ENCODE measurements at regions of chr4 and their contacts with region 1.

Region 1: DNA sequence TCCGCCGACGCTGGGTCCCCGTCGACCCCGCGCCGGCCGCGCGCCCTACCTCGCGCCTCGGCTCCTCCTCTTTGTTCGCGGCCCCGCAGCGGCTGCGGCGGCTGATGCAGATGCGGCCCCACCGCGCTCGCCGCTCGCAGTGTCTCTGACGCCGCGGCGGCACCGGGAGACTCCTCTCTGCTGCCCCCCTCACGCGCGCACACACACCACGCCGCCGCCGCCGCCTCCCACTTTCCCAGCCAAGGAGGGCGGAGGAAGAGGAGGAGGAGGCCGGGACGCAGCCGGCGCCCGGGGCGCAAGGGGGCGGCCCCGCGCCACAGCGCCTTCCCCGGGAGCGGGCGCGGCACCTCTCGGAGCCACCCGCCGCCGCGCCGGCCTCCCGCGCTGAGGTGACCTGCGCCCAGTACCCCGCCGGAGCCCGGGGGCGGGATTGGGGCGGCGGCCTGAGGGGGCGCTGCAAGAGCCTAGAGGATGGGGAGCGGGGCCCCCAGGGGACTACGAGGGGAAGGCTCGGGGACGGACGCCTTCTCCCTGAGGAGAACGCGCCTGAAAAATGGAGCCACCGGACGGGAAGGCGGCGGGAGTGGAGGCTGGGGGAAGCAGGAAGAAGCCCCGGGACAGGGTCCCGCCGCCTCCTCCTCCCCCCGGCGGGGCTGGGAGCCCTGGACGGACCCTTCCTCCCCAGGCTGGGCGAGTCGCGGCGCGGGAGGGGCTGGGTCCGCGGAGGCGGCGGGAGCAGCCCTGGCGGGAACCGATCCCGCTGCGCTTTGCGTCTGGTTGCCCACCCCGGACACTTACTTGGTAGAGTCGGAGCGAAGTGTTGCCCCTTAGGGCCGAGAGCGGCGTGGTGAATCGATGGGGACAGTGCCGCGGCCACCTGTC is at the start of gene SH3RF1:
- DNase-seq: peak; percentile 59
- ATAC-seq: peak; percentile 64
- H3K4me3 Mint-ChIP-seq: peak within 1 kb of the TSS; percentile 70
- H3K27ac Mint-ChIP-seq: no peak within 1 kb of the TSS
- H3K4me1 Mint-ChIP-seq: peaks cover 4% of the 10 kb centered on the region
- H3K27me3 Mint-ChIP-seq: peaks cover 56% of the 10 kb centered on the region
- total RNA-seq, gene SH3RF1: 0.39 to 0.63 TPM

Region 2: GRCh38 chr4:168864821-168865541 is 406.1 kb before region 1 on chr4:
- CTCF ChIA-PET with region 1: no interaction called
- POLR2A ChIA-PET with region 1: no interaction called
- intact Hi-C with region 1: loop called in 1 of 2 experiments (anchors 10 kb)
- DNase-seq: no peak
- ATAC-seq: no peak
- H3K4me3 Mint-ChIP-seq: no peak overlapping the region
- H3K27ac Mint-ChIP-seq: no peak overlapping the region
- H3K4me1 Mint-ChIP-seq: peaks cover 47% of the 10 kb centered on the region
- H3K27me3 Mint-ChIP-seq: peaks cover 6% of the 10 kb centered on the region

Region 3: GRCh38 chr4:169099771-169100180 is 171.3 kb before region 1 on chr4:
- CTCF ChIA-PET with region 1: no interaction called
- POLR2A ChIA-PET with region 1: no interaction called
- intact Hi-C with region 1: no loop called
- DNase-seq: no peak
- ATAC-seq: no peak
- H3K4me3 Mint-ChIP-seq: no peak overlapping the region
- H3K27ac Mint-ChIP-seq: no peak overlapping the region
- H3K4me1 Mint-ChIP-seq: no peaks in the 10 kb centered on the region
- H3K27me3 Mint-ChIP-seq: peaks cover 2% of the 10 kb centered on the region

Region 4: GRCh38 chr4:169410839-169411770 is 140.1 kb after region 1 on chr4:
- CTCF ChIA-PET with region 1: no interaction called
- POLR2A ChIA-PET with region 1: no interaction called
- intact Hi-C with region 1: loop called in 1 of 2 experiments (anchors 5 kb)
- DNase-seq: peak; percentile 74
- ATAC-seq: peak; percentile 99
- H3K4me3 Mint-ChIP-seq: peak overlapping the region; percentile 1
- H3K27ac Mint-ChIP-seq: peak overlapping the region; percentile 83
- H3K4me1 Mint-ChIP-seq: peaks cover 30% of the 10 kb centered on the region
- H3K27me3 Mint-ChIP-seq: no peaks in the 10 kb centered on the region

Region 5: DNA sequence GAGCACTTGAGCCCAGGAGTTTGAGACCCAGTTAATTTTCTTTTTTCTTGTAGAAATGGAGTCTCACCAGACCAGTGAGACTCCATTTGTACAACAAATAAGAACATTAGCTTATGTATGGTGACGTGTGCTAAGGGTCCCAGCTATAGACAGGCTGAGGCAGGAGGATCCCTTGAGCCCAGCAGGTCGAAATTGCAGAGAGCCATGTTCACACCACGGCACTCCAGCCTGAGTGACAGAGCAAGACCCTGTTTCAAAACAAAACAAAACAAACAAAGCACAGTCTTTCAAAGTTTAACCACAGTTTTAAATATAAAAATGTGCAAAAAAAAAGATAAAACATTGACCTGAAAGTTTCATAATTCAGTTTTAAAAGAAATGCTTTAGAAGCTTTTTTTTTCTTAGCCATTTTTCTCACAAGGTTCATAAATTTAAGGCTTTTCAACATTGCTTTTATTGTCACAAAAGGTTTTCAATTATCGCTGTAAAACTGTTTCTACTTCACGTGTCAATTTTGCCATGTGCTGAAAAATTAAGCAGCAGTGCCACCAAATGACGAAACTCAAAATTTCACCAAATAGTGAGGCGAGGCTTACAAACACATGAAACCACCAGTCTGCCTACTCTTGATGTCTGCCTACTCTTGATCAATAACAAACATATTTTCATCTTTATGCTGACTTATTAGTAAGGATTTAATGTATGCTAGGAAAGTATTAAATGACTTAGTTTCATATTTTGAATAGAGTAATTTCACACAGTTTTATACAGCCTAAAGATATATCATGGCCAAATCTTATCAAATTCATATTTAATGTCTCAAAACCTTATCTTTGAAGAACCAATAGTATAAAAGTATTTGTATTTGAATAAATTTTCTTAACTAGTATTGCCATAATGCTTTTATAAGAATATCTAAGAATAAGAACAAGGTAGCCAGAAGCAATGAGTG is 215.0 kb after region 1 on chr4:
- CTCF ChIA-PET with region 1: no interaction called
- POLR2A ChIA-PET with region 1: no interaction called
- intact Hi-C with region 1: loop called (anchors 5 kb)
- DNase-seq: peak; percentile 53
- ATAC-seq: peak; percentile 49
- H3K4me3 Mint-ChIP-seq: no peak overlapping the region
- H3K27ac Mint-ChIP-seq: no peak overlapping the region
- H3K4me1 Mint-ChIP-seq: no peaks in the 10 kb centered on the region
- H3K27me3 Mint-ChIP-seq: no peaks in the 10 kb centered on the region